Activated CD4-positive, alpha-beta memory T cell treated with anti-CD3 and anti-CD28 coated beads for 36 hours (primary cell): ENCODE measurements at regions of chr13 and their contacts with region 1.

Region 1: DNA sequence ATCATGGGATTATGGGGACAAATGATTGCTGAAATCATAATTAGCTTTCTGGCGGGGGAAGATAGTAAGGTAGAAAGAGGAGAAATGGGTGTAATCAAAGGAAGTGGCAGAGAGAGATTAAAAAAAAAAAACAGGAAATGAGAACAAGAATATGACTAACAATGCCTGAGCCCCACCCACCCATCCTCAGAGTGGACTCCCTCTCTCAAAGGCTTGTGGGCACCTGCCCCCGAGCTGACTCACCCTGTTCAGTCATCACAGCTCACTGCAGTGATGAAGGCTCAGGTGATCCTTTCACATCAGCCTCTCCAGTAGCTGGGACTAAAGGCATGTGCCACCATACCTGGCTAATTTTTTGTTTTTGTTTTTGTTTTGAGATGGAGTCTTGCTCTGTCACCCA is 26.4 kb upstream of the TPT1 start:
- DNase-seq: peak; percentile 96
- H3K4me3 Mint-ChIP-seq: peak overlapping the region; percentile 39
- H3K27ac Mint-ChIP-seq: peak overlapping the region; percentile 85
- H3K4me1 Mint-ChIP-seq: peaks cover 52% of the 10 kb centered on the region
- H3K27me3 Mint-ChIP-seq: no peaks in the 10 kb centered on the region

Region 2: GRCh38 chr13:45332036-45332830 is 35.1 kb before region 1 on chr13:
- CTCF ChIA-PET with region 1: interaction called, 4 read pairs
- POLR2A ChIA-PET with region 1: interaction called, 8 read pairs
- intact Hi-C with region 1: loop called (anchors 5 kb)
- DNase-seq: no peak
- H3K4me3 Mint-ChIP-seq: no peak overlapping the region
- H3K27ac Mint-ChIP-seq: peak overlapping the region; percentile 29
- H3K4me1 Mint-ChIP-seq: peaks cover 89% of the 10 kb centered on the region
- H3K27me3 Mint-ChIP-seq: no peaks in the 10 kb centered on the region

Region 3: GRCh38 chr13:45393941-45394570 is 26.7 kb after region 1 on chr13:
- CTCF ChIA-PET with region 1: interaction called, 71 read pairs
- POLR2A ChIA-PET with region 1: interaction called, 14 read pairs
- intact Hi-C with region 1: loop called (anchors 1 kb)
- DNase-seq: peak; percentile 47
- H3K4me3 Mint-ChIP-seq: no peak overlapping the region
- H3K27ac Mint-ChIP-seq: no peak overlapping the region
- H3K4me1 Mint-ChIP-seq: peaks cover 46% of the 10 kb centered on the region
- H3K27me3 Mint-ChIP-seq: no peaks in the 10 kb centered on the region

Region 4: DNA sequence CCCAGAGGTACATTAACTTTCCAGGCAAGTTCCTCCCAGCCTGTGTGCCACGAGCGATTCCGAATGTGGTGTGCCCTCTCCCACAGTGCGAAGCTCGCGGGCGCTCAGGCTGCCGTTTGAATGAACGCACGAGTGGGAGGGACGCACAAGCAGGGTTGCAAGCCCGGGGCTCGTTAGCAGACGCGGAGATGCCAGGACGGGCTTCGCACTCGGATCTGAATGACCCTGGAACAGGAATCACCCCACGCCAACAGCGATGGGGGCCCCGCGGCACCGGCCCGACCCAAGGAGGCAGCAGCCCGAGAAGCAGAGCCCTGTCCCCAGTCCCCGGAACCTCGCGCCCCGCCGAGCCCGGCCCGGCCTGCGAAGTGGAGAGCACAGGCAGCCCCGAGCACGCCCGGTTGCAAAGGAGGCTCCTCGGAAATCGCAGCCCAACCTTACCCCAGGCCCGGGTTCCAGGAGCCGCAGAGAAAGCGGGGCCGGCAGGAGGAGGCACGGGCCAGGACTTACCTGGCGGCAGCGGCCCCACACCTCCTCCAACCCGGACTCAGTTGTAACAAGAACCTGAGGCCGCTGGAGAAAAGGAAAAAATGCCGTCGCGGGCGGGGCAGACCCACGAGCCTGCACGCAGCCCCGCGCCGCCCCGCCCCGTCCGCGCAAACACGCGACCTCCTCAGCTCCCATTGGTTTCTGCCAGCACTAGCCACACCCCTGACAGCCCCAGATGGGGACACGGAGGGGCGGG is 50.6 kb after region 1 on chr13 and contains the start of gene SLC25A30:
- CTCF ChIA-PET with region 1: interaction called, 18 read pairs
- POLR2A ChIA-PET with region 1: interaction called, 11 read pairs
- intact Hi-C with region 1: loop called (anchors 1 kb)
- DNase-seq: peak; percentile 93
- H3K4me3 Mint-ChIP-seq: peak within 1 kb of the TSS; percentile 84
- H3K27ac Mint-ChIP-seq: peak within 1 kb of the TSS; percentile 88
- H3K4me1 Mint-ChIP-seq: peaks cover 16% of the 10 kb centered on the region
- H3K27me3 Mint-ChIP-seq: no peaks in the 10 kb centered on the region
- total RNA-seq, gene SLC25A30: 14.6 to 15.3 TPM

Region 5: DNA sequence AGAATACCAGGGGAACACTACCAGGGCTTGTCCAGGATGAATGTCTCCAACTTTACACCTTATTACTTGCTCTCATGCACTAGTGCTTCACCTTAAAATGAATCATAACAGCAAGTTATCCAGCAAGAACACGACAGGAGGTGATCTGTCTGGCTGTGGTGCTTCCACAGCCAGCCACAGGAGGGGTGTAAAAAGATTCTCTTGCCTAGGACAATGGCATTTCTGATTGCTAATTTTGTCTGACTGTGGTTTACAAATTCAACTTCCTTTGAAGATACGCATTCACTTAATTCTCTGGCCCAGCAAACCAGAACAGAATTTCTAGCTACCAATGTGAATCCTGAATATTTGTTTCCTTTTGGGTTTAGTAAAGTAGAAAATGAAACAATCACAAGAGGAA is 74.3 kb after region 1 on chr13:
- CTCF ChIA-PET with region 1: no interaction called
- POLR2A ChIA-PET with region 1: no interaction called
- intact Hi-C with region 1: no loop called
- DNase-seq: peak; percentile 45
- H3K4me3 Mint-ChIP-seq: no peak overlapping the region
- H3K27ac Mint-ChIP-seq: no peak overlapping the region
- H3K4me1 Mint-ChIP-seq: peaks cover 9% of the 10 kb centered on the region
- H3K27me3 Mint-ChIP-seq: no peaks in the 10 kb centered on the region

Region 6: DNA sequence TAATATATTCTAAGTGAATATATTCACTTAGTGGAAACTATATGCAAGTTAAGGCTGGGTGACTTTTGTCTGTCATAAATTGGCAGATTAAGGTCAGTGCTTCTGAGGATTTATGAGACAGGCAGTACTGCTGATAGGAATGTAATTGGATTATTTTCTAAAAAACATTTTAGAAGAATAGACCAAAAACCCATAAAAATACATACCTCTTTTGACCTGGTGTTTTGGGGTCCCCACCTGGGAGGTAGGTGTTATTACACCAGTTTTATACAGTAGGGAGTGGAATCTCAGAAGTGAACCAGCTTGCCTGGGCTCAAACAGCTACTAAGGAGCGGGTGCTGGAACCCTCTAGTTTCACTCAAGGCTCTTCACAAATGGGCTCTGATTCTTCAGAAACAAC is 122.7 kb after region 1 on chr13:
- CTCF ChIA-PET with region 1: interaction called, 25 read pairs
- POLR2A ChIA-PET with region 1: no interaction called
- intact Hi-C with region 1: loop called (anchors 1 kb)
- DNase-seq: no peak
- H3K4me3 Mint-ChIP-seq: no peak overlapping the region
- H3K27ac Mint-ChIP-seq: no peak overlapping the region
- H3K4me1 Mint-ChIP-seq: peaks cover 2% of the 10 kb centered on the region
- H3K27me3 Mint-ChIP-seq: no peaks in the 10 kb centered on the region